Activated CD8-positive, alpha-beta T cell treated with anti-CD3 and anti-CD28 coated beads for 36 hours (primary cell): ENCODE measurements at regions of chr4 and their contacts with region 1.

Region 1: DNA sequence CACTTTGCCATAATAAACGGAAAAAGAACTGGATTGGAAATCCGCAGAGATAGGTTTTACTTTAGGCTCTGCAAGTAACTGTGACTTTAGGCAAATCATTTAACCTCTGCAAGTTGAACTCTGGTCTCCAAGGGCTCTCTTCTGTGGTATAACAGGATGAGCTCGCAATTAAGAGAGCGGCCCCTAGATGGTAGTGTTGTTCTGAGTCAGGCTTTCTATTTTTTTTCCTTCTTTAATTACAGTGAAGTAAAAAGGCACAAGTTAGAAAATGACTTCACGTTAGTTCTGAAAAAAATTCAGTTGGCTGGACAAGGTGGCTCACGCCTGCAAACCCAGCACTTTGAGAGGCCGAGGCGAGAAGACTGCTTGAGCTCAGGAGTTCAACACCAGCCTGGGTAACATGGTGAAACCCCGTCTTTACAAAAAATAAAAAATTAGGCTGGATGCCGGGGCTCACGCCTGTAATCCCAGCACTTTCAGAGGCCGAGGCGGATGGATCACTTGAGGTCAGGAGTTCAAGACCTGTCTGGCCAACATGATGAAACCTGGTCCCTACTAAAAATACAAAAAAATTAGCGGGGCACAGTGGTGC is 18.0 kb downstream of the RPS3A start:
- DNase-seq: peak; percentile 73
- ATAC-seq: peak; percentile 79
- H3K4me3 Mint-ChIP-seq: no peak overlapping the region
- H3K27ac Mint-ChIP-seq: no peak overlapping the region
- H3K4me1 Mint-ChIP-seq: peaks cover 5% of the 10 kb centered on the region
- H3K27me3 Mint-ChIP-seq: no peaks in the 10 kb centered on the region
- CTCF ChIP-seq: peak; percentile 74

Region 2: DNA sequence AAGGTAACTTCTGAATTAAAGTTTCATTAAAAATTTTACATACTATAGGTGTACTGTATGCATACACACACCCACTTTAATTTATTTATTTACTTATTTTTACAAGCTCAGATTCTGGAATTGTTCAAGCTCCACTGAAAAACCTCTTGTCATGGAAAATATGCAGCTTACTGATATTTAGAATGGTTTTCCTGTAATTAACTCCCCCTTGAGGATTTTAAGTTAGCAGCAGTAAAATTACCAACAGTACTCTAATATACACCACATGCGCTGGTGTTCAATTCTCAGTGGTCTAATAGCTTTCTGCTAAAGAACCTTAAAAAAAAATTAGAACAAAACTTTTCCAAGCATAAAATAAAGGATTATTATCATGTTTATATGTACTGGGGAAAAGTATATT is 523.5 kb before region 1 on chr4:
- CTCF ChIA-PET with region 1: no interaction called
- POLR2A ChIA-PET with region 1: no interaction called
- intact Hi-C with region 1: no loop called
- DNase-seq: no peak
- ATAC-seq: no peak
- H3K4me3 Mint-ChIP-seq: no peak overlapping the region
- H3K27ac Mint-ChIP-seq: no peak overlapping the region
- H3K4me1 Mint-ChIP-seq: no peaks in the 10 kb centered on the region
- H3K27me3 Mint-ChIP-seq: no peaks in the 10 kb centered on the region
- CTCF ChIP-seq: no peak

Region 3: GRCh38 chr4:151105454-151106032 is 11.9 kb before region 1 on chr4:
- CTCF ChIA-PET with region 1: interaction called, 23 read pairs
- POLR2A ChIA-PET with region 1: interaction called, 22 read pairs
- intact Hi-C with region 1: no loop called
- DNase-seq: no peak
- ATAC-seq: peak; percentile 32
- H3K4me3 Mint-ChIP-seq: no peak overlapping the region
- H3K27ac Mint-ChIP-seq: peak overlapping the region; percentile 14
- H3K4me1 Mint-ChIP-seq: peaks cover 30% of the 10 kb centered on the region
- H3K27me3 Mint-ChIP-seq: no peaks in the 10 kb centered on the region
- CTCF ChIP-seq: no peak